ENCODE measurements at regions of chr7 and their contacts with region 1.

Region 1: DNA sequence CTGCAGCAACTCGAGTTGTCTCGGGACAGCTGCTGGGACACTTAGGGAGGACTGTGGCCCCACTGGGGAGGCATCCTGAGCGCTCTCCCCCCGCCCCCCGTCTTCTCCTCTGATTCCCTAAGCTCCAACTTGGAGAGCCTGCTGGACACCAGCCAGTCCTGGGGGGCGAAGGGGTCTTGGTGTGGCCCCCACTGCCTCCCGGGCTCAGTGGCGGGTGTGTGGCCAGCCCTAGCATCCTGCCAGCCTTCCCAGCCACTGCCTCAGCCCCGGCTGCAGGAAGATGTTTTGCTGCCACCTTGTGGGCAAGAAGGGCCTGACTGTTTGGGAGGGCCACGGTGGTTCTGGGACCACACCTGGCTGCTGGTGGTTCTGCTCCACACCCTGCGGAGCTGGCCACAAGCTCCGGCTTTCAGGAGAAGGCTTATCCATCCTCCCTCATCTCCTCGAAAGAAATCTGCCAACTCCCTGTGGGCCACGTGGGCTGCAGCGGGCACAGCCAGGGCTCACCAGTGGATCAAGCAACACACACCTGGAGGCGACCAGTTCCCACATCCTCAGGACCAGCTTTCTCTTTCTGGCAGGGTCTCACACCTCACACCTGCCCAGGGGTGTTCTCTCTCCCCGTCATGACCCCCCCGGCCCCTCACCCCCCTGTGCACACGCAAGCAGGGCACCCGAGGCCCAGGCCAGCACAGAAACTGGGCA is 24.8 kb downstream of the AGAP3 start:
- DNase-seq: peak; percentile 54 to 84 (median 78)
- ATAC-seq: peak; percentile 80
- H3K4me3 ChIP-seq: no peak overlapping the region
- H3K4me3 Mint-ChIP-seq: no peak overlapping the region
- H3K27ac ChIP-seq: no peak overlapping the region
- H3K27ac Mint-ChIP-seq: no peak overlapping the region
- H3K4me1 ChIP-seq: no peaks in the 10 kb centered on the region
- H3K4me1 Mint-ChIP-seq: peaks cover 6% of the 10 kb centered on the region
- H3K27me3 ChIP-seq: peaks cover 2 to 8% of the 10 kb centered on the region in 2 experiments
- H3K27me3 Mint-ChIP-seq: peaks cover 9% of the 10 kb centered on the region
- CTCF ChIP-seq: peak; percentile 75

Region 2: DNA sequence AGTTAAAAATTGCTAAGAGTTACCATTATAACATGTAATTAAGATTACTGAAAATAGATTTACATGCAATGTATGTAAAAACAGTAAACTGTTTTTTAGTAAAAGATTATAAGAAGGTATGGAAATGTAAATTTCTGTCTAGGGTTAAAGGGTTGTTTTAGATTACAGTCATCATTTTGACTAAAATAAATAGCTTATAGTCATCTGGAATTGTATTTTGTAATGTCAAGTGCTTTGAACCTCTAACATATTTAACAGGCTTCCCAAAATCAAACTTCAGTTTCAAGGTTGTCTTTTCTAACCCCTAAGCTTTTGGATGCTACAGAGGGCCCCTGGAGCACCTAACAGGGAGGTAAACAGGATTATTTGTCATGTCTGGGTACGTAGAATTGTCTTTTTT is 1578.4 kb before region 1 on chr7:
- CTCF ChIA-PET with region 1: no interaction called
- POLR2A ChIA-PET with region 1: no interaction called
- intact Hi-C with region 1: no loop called
- DNase-seq: no peak
- ATAC-seq: no peak
- H3K4me3 ChIP-seq: no peak overlapping the region
- H3K4me3 Mint-ChIP-seq: no peak overlapping the region
- H3K27ac ChIP-seq: no peak overlapping the region
- H3K27ac Mint-ChIP-seq: no peak overlapping the region
- H3K4me1 ChIP-seq: peaks cover 5% of the 10 kb centered on the region
- H3K4me1 Mint-ChIP-seq: peaks cover 14% of the 10 kb centered on the region
- H3K27me3 ChIP-seq: no peaks in the 10 kb centered on the region
- H3K27me3 Mint-ChIP-seq: no peaks in the 10 kb centered on the region
- CTCF ChIP-seq: no peak

Region 3: DNA sequence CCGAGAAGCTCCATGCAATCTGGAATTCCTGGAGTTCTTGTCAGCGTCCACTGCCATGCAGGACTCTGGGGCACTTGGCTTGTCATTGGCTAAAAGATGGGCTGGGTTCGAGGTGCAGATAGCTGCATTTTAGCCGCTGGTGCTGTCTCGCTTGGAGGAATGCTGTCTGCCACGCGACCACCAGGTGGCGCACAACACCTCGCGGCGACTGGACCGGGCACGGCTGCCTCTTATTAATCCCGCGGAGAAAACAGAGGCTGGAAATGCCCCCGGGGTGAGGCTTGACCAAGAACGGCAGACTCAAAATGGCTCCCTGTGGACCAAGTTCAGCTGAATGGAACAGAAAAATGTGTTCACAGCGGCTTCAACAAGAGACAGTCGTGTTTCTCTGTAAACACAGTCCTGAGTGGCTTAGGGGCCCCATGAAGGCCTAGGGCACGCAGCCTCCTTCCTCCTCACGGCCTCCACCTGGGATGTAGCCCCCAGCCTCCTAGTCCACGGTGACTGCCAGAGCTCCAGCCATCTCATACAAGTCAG is 212.6 kb before region 1 on chr7:
- CTCF ChIA-PET with region 1: interaction called, 24 read pairs
- POLR2A ChIA-PET with region 1: no interaction called
- intact Hi-C with region 1: loop called in 1 of 2 experiments (anchors 1 kb)
- DNase-seq: peak; percentile 60 to 90 (median 79)
- ATAC-seq: peak; percentile 69
- H3K4me3 ChIP-seq: no peak overlapping the region
- H3K4me3 Mint-ChIP-seq: no peak overlapping the region
- H3K27ac ChIP-seq: no peak overlapping the region
- H3K27ac Mint-ChIP-seq: no peak overlapping the region
- H3K4me1 ChIP-seq: peaks cover 7% of the 10 kb centered on the region
- H3K4me1 Mint-ChIP-seq: peaks cover 9% of the 10 kb centered on the region
- H3K27me3 ChIP-seq: peaks cover 0 to 4% of the 10 kb centered on the region in 2 experiments
- H3K27me3 Mint-ChIP-seq: peaks cover 61% of the 10 kb centered on the region
- CTCF ChIP-seq: peak; percentile 92

Region 4: GRCh38 chr7:150988230-150989226 is 122.6 kb before region 1 on chr7:
- CTCF ChIA-PET with region 1: interaction called, 27 read pairs
- POLR2A ChIA-PET with region 1: no interaction called
- intact Hi-C with region 1: loop called in 1 of 2 experiments (anchors 2 kb)
- DNase-seq: peak; percentile 45 to 80 (median 72)
- ATAC-seq: peak; percentile 79
- H3K4me3 ChIP-seq: no peak overlapping the region
- H3K4me3 Mint-ChIP-seq: peak overlapping the region; percentile 37
- H3K27ac ChIP-seq: no peak overlapping the region
- H3K27ac Mint-ChIP-seq: no peak overlapping the region
- H3K4me1 ChIP-seq: peaks cover 22% of the 10 kb centered on the region
- H3K4me1 Mint-ChIP-seq: peaks cover 18% of the 10 kb centered on the region
- H3K27me3 ChIP-seq: peaks cover 0 to 2% of the 10 kb centered on the region in 2 experiments
- H3K27me3 Mint-ChIP-seq: peaks cover 6% of the 10 kb centered on the region
- CTCF ChIP-seq: peak; percentile 79

Region 5: DNA sequence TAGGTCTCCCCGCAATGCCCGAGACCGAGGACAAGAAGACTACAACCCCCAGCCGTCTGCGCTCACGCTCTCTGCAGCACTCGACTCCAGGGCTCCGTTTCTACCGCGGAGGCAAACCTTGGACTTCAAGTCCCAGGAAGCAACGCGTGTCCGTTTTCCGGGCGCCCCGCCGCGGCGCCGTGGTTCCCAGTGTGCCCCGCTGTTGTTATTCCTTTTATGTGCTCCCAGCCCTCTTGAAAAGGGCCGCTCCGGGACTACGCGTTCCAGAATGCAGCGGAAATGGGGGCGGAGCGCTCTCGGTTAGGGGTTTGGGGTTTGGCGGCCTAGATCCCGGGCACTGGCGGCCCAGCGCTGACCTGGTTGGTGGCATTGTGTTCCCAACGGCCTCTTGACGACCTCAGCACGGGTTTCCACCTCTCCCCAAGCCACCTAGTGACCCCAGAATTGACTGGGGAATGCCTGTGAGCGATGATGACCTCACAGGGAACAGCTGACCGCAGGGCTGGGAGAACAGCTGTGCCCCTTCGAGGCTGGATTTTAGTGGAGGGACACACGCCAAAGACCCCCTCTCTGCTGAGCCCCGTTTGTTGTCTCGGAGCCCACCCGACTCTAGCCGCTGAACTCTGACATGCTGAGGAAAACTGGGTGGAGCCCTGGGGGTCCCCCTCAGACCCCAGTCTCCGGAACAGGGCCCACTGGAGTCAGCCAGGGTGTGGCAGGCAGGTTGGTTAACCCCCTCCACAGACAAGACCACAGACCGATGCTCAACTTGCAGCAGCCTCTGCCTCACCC is 52.9 kb before region 1 on chr7:
- CTCF ChIA-PET with region 1: interaction called, 7 read pairs
- POLR2A ChIA-PET with region 1: no interaction called
- intact Hi-C with region 1: loop called (anchors 1 to 2 kb)
- DNase-seq: peak; percentile 93 to 100 (median 97)
- ATAC-seq: peak; percentile 93
- H3K4me3 ChIP-seq: peak overlapping the region; percentile 71 to 83
- H3K4me3 Mint-ChIP-seq: peak overlapping the region; percentile 78
- H3K27ac ChIP-seq: peak overlapping the region; percentile 65 to 87
- H3K27ac Mint-ChIP-seq: peak overlapping the region; percentile 89
- H3K4me1 ChIP-seq: peaks cover 34% of the 10 kb centered on the region
- H3K4me1 Mint-ChIP-seq: peaks cover 41% of the 10 kb centered on the region
- H3K27me3 ChIP-seq: no peaks in the 10 kb centered on the region
- H3K27me3 Mint-ChIP-seq: no peaks in the 10 kb centered on the region
- CTCF ChIP-seq: no peak

Region 6: GRCh38 chr7:151095123-151095797 is 15.8 kb before region 1 on chr7:
- CTCF ChIA-PET with region 1: interaction called, 32 read pairs
- POLR2A ChIA-PET with region 1: no interaction called
- intact Hi-C with region 1: no loop called
- DNase-seq: peak in 1 of 9 experiments; percentile 14
- ATAC-seq: no peak
- H3K4me3 ChIP-seq: no peak overlapping the region
- H3K4me3 Mint-ChIP-seq: no peak overlapping the region
- H3K27ac ChIP-seq: no peak overlapping the region
- H3K27ac Mint-ChIP-seq: no peak overlapping the region
- H3K4me1 ChIP-seq: no peaks in the 10 kb centered on the region
- H3K4me1 Mint-ChIP-seq: no peaks in the 10 kb centered on the region
- H3K27me3 ChIP-seq: no peaks in the 10 kb centered on the region
- H3K27me3 Mint-ChIP-seq: peaks cover 4% of the 10 kb centered on the region
- CTCF ChIP-seq: no peak

Region 7: GRCh38 chr7:152103691-152104090 is 992.6 kb after region 1 on chr7:
- CTCF ChIA-PET with region 1: no interaction called
- POLR2A ChIA-PET with region 1: no interaction called
- intact Hi-C with region 1: no loop called
- DNase-seq: no peak
- ATAC-seq: no peak
- H3K4me3 ChIP-seq: no peak overlapping the region
- H3K4me3 Mint-ChIP-seq: no peak overlapping the region
- H3K27ac ChIP-seq: no peak overlapping the region
- H3K27ac Mint-ChIP-seq: peak overlapping the region; percentile 28
- H3K4me1 ChIP-seq: no peaks in the 10 kb centered on the region
- H3K4me1 Mint-ChIP-seq: no peaks in the 10 kb centered on the region
- H3K27me3 ChIP-seq: no peaks in the 10 kb centered on the region
- H3K27me3 Mint-ChIP-seq: no peaks in the 10 kb centered on the region
- CTCF ChIP-seq: no peak